ENCODE measurements at regions of chr15 and their contacts with region 1.

Region 1: GRCh38 chr15:49428409-49429095 is 5.5 kb downstream of the FGF7 start:
- DNase-seq: no peak
- ATAC-seq: no peak
- H3K4me3 ChIP-seq: no peak overlapping the region
- H3K4me3 Mint-ChIP-seq: no peak overlapping the region
- H3K27ac ChIP-seq: no peak overlapping the region
- H3K27ac Mint-ChIP-seq: no peak overlapping the region
- H3K4me1 ChIP-seq: no peaks in the 10 kb centered on the region
- H3K4me1 Mint-ChIP-seq: no peaks in the 10 kb centered on the region
- H3K27me3 ChIP-seq: no peaks in the 10 kb centered on the region
- H3K27me3 Mint-ChIP-seq: peaks cover 3 to 7% of the 10 kb centered on the region in 2 donors
- CTCF ChIP-seq: no peak

Region 2: DNA sequence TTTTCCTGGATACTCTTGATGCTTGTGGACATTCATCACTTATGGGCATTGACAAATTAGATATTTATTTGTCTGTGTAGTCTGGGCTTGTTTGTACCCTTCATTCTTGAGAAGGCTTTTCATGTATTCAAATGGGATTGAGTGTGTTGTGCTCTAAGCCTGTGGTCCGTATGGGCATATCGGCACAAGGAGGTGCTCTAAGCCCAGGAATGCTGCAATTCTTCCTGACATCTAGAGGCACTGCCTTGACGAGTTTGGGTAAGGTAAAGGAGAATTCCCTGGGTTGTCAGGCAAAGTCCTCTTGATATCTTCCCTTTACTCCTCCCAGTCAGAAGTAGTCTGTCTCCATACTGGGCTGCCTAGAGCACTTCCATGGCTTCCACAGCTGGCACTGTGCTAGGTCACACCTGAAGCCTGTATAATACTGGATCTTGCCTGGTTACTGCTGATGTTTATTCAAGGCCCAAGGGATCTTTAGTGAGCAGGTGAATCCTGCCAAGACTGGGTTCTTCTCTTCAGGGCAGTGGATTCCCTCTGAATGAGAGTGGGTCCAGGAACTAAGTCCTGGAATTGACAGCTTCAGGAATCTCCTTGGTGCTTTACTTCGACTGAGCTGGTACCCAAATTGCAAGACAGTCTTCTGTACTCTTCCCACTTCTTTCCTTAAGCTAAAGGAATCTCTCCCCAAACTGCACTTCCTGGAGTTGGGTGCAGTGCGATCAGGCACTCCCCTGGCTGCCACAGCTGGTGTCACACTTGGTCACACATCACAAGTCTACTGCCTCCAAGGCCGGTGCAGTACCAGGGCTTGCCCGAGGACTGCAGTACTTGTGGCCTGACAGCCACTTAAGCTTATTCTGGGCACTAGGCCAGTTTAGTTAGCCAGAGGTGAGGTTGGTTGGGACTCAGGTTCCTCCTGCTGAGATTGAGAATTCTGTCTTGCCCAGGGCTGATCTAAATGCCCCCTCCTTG is 212.5 kb before region 1 on chr15:
- intact Hi-C with region 1: loop called (anchors 5 kb)
- DNase-seq: peak; percentile 4 to 24
- ATAC-seq: peak; percentile 88 to 99 (median 98)
- H3K4me3 ChIP-seq: no peak overlapping the region
- H3K4me3 Mint-ChIP-seq: no peak overlapping the region
- H3K27ac ChIP-seq: no peak overlapping the region
- H3K27ac Mint-ChIP-seq: peak overlapping the region; percentile 6 to 68
- H3K4me1 ChIP-seq: peaks cover 8% of the 10 kb centered on the region
- H3K4me1 Mint-ChIP-seq: peaks cover 36 to 39% of the 10 kb centered on the region in 2 donors
- H3K27me3 ChIP-seq: no peaks in the 10 kb centered on the region
- H3K27me3 Mint-ChIP-seq: no peaks in the 10 kb centered on the region
- CTCF ChIP-seq: no peak

Region 3: GRCh38 chr15:49438962-49439631 is 10.5 kb after region 1 on chr15:
- intact Hi-C with region 1: no loop called
- DNase-seq: no peak
- ATAC-seq: peak; percentile 12 to 66 (median 50)
- H3K4me3 ChIP-seq: no peak overlapping the region
- H3K4me3 Mint-ChIP-seq: peak overlapping the region; percentile 9
- H3K27ac ChIP-seq: no peak overlapping the region
- H3K27ac Mint-ChIP-seq: peak overlapping the region; percentile 41 to 56
- H3K4me1 ChIP-seq: peaks cover 4% of the 10 kb centered on the region
- H3K4me1 Mint-ChIP-seq: peaks cover 23% of the 10 kb centered on the region in 2 donors
- H3K27me3 ChIP-seq: no peaks in the 10 kb centered on the region
- H3K27me3 Mint-ChIP-seq: peaks cover 0 to 1% of the 10 kb centered on the region in 2 donors
- CTCF ChIP-seq: no peak